HAP-1 (cell line): ENCODE measurements at regions of chr5 and their contacts with region 1.

Region 1: DNA sequence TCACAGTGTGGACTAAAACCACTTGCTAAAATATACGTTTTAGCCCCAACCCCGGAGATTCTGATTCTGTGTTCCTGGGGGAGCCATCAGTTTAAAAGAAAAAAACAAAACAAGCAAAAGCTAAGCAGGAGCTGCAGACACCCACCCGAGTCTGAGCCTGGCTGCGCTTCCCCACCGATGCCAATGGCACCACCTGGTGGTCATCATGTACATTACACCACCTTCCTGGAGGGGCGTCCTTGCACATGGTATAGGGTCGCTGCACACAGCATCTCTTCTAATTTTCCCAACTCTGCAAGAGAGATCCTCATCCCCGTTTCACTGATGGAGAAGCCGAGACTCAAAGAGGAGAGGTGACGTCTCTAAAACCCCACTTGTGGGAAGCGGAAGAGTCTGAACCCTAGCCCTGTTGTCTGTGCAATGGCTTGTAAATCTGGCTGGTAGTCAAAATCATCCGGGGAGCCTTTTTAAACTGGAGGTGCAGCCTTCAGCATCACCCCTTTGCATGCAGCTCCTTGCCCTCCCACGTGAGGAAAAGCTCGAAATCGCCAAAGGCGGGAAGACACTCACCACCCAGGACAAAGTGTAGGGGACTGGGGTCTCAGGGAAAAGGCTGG is 23.1 kb upstream of the CNOT6 start:
- DNase-seq: peak; percentile 34 to 79
- H3K4me3 ChIP-seq: no peak overlapping the region
- H3K4me1 ChIP-seq: no peaks in the 10 kb centered on the region
- H3K27me3 ChIP-seq: peaks cover 6% of the 10 kb centered on the region; the same call in 1 of the 2 replicates

Region 2: DNA sequence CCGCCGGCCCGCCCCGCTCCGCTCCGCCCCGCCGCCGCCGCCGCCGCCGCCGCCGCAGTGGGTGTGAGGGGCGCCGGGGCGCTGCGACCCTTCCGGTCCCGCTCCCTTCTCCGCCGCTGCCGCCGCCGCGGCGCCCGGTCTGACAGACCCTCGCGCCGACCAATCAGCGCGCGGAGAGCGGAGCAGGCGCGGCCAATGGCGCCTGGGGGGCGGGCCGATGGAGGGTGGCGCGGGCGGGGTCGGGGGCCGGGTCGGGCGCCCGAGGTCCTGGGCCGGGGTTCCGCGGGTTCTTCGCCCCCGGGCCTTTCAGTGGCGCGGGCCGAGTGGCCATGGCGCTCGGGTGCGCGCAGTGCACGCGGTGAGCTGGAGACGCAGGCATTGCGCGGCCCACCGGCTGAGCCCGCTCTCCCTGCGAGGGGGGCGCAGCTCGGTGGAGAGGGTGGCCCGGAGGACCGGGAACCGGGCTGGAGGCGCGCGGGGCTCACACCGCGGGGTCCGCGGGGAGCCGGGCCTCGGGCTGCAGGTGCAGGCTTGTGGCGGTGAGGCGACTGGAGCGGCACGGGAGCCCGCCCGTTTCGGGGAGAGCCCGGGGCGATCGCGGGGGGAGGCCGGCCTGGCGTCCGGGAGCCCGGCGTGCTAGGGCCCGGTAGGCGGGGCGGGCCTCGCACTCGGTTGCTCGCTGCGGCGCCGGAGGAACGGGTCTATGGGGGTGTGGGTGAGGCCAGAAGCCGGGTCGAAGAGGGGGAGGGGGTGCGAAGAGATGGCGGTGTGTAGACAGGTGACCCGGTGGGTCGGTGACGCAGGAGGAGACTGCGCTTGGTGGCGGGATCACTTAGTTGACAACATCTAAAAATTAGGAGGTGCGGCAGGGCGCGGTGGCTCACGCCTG is 178.9 kb before region 1 on chr5 and contains the start of gene MAPK9:
- in situ Hi-C with region 1: loop called (anchors 10 kb)
- DNase-seq: peak; percentile 78 to 89
- H3K4me3 ChIP-seq: peak within 1 kb of the TSS; percentile 63
- H3K4me1 ChIP-seq: peaks cover 24% of the 10 kb centered on the region
- H3K27me3 ChIP-seq: no peaks in the 10 kb centered on the region